ENCODE measurements at regions of chr3 and their contacts with region 1.

Region 1: DNA sequence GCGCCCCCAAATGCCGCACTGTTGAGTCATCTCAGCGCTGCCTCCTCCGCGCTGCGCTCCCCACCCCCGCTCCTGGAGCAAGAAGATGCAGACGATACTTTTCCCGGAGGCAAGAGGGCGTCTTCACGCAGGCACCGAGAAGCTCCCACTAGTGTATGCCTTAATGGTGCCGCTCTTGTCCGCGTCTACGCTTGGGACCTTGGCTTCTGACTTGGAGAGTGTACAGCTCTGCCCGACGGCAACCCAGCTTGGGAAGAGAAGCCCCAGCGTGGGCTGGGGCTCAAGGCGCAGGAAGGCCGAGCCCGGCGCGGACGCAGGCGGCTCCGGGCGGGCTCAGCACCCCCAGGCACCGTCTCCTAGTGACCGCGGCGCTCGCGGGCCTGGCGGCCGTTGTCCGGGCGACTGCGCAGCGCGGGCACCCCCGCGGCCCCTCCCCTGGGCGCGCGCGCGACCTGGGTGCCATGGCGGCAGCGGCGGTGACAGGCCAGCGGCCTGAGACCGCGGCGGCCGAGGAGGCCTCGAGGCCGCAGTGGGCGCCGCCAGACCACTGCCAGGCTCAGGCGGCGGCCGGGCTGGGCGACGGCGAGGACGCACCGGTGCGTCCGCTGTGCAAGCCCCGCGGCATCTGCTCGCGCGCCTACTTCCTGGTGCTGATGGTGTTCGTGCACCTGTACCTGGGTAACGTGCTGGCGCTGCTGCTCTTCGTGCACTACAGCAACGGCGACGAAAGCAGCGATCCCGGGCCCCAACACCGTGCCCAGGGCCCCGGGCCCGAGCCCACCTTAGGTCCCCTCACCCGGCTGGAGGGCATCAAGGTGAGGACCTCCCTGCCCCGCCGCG is at the start of gene P4HTM:
- DNase-seq: peak; percentile 78 to 88 (median 85)
- ATAC-seq: peak; percentile 93
- H3K4me3 ChIP-seq: peak within 1 kb of the TSS; percentile 41
- H3K27ac ChIP-seq: peak within 1 kb of the TSS; percentile 78
- H3K4me1 ChIP-seq: peaks cover 9 to 21% of the 10 kb centered on the region in 2 experiments
- H3K27me3 ChIP-seq: no peaks in the 10 kb centered on the region
- CTCF ChIP-seq: peak; percentile 58 to 74 (median 64)
- EP300 ChIP-seq: peak; percentile 49; the same call in 1 of the 2 replicates
- POLR2A ChIP-seq: no peak
- RAD21 ChIP-seq: peak in 1 of 2 experiments; percentile 21; a peak in 1 of 4 replicates
- polyA plus RNA-seq, gene P4HTM: not detected

Region 2: DNA sequence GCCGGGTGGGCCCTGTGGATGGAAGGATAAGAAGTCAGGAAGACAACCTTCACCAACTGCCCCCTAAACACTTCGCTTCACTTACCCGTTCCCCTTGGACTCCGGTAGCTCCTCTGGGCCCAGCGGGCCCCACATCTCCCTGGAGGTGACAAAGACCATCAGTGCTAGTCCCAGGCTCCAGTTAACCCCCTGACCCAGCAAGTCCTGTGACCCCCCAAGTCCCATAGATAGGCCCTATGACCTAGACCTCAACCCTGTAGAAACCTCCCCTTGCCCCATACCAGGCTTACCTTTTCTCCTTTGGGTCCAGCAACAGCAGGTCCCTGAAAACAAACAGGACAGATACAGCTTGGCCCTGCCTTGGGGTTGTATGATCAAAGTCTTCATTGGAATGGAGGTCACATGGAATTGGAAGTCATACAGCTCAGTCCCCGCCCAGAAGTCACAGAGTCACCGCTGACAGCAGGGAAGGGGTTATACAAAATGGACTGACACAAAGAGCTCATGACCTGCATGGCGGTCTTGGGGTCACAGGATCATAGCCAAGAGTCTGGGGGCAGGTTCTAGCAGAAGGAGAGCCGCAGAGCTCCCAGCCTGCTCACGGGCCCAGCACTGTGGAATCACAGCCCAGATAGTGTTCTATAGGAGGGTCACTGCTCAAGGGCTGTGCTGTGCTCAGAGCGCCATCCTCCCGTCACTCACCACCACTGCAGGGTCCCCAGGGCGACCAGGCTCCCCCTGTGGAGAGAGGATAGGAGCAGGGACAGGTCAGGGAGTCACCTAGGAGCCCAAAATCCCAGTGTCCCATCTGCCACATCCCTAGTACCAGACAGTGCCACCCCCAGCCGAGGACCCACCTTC is 408.2 kb before region 1 on chr3:
- CTCF ChIA-PET with region 1: no interaction called
- POLR2A ChIA-PET with region 1: no interaction called
- in situ Hi-C with region 1: no loop called
- intact Hi-C with region 1: no loop called
- DNase-seq: no peak
- ATAC-seq: peak; percentile 61
- H3K4me3 ChIP-seq: no peak overlapping the region
- H3K27ac ChIP-seq: no peak overlapping the region
- H3K4me1 ChIP-seq: no peaks in the 10 kb centered on the region; a peak in 1 of 5 replicates
- H3K27me3 ChIP-seq: no peaks in the 10 kb centered on the region
- CTCF ChIP-seq: peak in 2 of 3 experiments; percentile 19 to 47; a peak in 4 of 6 replicates
- EP300 ChIP-seq: no peak
- POLR2A ChIP-seq: no peak
- RAD21 ChIP-seq: no peak

Region 3: GRCh38 chr3:48945891-48946549 is 44.0 kb before region 1 on chr3:
- CTCF ChIA-PET with region 1: no interaction called
- POLR2A ChIA-PET with region 1: no interaction called
- in situ Hi-C with region 1: no loop called
- intact Hi-C with region 1: no loop called
- DNase-seq: no peak
- ATAC-seq: no peak
- H3K4me3 ChIP-seq: no peak overlapping the region
- H3K27ac ChIP-seq: no peak overlapping the region
- H3K4me1 ChIP-seq: peaks cover 0 to 3% of the 10 kb centered on the region in 2 experiments; a peak in 1 of 5 replicates
- H3K27me3 ChIP-seq: no peaks in the 10 kb centered on the region
- CTCF ChIP-seq: no peak
- EP300 ChIP-seq: no peak
- POLR2A ChIP-seq: no peak
- RAD21 ChIP-seq: no peak

Region 4: DNA sequence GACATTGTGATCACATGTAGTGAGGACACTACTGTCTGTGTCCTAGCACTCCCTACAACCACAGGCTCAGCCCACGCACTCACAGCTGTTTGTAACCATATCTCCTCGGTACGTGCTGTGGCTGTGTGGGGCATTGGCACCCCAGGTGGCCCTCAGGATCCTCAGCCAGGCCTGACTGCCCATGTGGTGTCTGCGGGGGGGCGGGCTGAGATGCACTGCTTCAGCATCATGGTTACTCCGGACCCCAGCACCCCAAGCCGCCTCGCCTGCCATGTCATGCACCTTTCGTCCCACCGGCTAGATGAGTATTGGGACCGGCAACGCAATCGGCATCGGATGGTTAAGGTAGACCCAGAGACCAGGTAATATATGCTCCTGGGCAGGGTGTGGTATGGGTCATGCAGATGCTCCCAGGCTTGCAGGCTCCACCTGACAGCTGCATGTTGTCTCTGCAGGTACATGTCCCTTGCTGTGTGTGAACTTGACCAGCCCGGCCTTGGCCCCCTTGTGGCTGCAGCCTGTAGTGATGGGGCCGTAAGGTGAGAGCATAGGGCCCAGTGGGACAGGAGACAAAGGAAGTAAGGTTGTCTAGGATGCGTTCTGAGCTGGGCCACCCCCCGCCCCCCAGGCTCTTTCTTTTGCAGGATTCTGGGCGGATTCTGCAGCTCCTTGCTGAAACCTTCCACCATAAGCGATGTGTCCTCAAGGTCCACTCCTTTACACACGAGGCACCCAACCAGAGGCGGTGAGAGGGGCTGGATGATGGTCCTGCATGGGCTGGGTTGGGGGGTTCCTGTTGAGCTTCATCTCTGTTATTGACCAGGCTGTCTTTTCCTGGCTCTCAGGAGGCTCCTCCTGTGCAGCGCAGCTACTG is 24.0 kb after region 1 on chr3:
- CTCF ChIA-PET with region 1: no interaction called
- POLR2A ChIA-PET with region 1: interaction called, 4 read pairs
- in situ Hi-C with region 1: no loop called
- intact Hi-C with region 1: loop called (anchors 2 kb)
- DNase-seq: peak in 3 of 4 experiments; percentile 20 to 68 (median 47)
- ATAC-seq: peak; percentile 61
- H3K4me3 ChIP-seq: no peak overlapping the region
- H3K27ac ChIP-seq: no peak overlapping the region
- H3K4me1 ChIP-seq: peaks cover 8 to 34% of the 10 kb centered on the region in 2 experiments; a peak in 4 of 5 replicates
- H3K27me3 ChIP-seq: no peaks in the 10 kb centered on the region
- CTCF ChIP-seq: peak; percentile 61 to 71 (median 71)
- EP300 ChIP-seq: no peak
- POLR2A ChIP-seq: no peak
- RAD21 ChIP-seq: peak in 1 of 2 experiments; percentile 51; a peak in 2 of 4 replicates

Region 5: GRCh38 chr3:49158108-49158709 is 168.2 kb after region 1 on chr3:
- CTCF ChIA-PET with region 1: no interaction called
- POLR2A ChIA-PET with region 1: interaction called, 3 read pairs
- in situ Hi-C with region 1: no loop called
- intact Hi-C with region 1: loop called (anchors 5 kb)
- DNase-seq: peak in 3 of 4 experiments; percentile 35 to 67 (median 40)
- ATAC-seq: peak; percentile 76
- H3K4me3 ChIP-seq: no peak overlapping the region
- H3K27ac ChIP-seq: no peak overlapping the region
- H3K4me1 ChIP-seq: peaks cover 0 to 3% of the 10 kb centered on the region in 2 experiments; a peak in 2 of 5 replicates
- H3K27me3 ChIP-seq: no peaks in the 10 kb centered on the region
- CTCF ChIP-seq: peak; percentile 54 to 66 (median 64)
- EP300 ChIP-seq: no peak
- POLR2A ChIP-seq: no peak
- RAD21 ChIP-seq: peak; percentile 27 to 63; a peak in 2 of 4 replicates

Measured in K562 (cell line).